WTC11 (cell line): ENCODE measurements at regions of chr17 and their contacts with region 1.

Region 1: DNA sequence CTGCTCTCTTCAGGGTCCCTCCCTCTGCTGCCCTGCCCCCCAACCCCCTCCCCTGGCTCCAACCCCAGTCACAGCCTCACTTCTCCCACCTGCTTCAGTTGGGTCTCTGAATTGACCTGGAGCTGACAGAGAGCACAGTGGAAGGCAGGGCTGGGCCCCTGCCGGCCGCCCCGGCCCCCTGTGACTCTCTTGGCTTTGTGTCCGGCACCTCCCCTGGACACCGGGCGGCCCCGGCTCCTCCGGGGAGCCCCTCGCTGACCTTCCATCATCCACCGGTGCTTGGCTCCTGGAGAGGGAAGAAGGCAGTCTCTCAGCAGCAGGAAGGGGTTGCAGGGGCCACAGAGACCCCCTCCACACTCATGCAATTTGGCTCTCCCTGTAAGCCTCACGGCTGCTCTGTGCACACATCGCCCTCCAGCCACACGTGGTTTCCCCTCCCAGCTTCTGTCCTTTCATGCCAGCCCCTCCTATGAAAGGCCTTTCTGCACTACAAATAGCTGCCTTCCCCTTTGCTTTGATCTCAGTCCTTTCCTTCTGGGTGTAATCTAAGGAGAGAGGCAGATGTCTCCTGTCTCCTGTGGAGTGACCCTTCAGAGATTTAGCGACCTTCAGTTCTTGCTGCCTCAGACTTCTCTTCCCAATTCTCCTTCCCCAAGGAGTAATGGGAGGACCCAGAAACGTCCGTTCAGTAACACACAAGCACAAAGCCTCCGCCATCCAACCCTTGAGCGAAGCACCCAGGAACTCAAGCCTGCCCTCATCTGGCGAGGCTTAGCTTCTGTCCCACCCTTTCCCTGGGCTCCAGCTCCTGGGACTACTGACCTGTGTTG is 8.3 kb downstream of the NKIRAS2 start:
- DNase-seq: peak; percentile 76
- ATAC-seq: peak; percentile 84
- H3K4me3 Mint-ChIP-seq: peak overlapping the region; percentile 35; the same call in 1 of the 2 replicates
- H3K27ac Mint-ChIP-seq: peak overlapping the region; percentile 81; the same call in 1 of the 2 replicates
- H3K4me1 Mint-ChIP-seq: peaks cover 11% of the 10 kb centered on the region
- H3K27me3 Mint-ChIP-seq: peaks cover 3% of the 10 kb centered on the region; the same call in 1 of the 2 replicates
- CTCF ChIP-seq: no peak

Region 2: DNA sequence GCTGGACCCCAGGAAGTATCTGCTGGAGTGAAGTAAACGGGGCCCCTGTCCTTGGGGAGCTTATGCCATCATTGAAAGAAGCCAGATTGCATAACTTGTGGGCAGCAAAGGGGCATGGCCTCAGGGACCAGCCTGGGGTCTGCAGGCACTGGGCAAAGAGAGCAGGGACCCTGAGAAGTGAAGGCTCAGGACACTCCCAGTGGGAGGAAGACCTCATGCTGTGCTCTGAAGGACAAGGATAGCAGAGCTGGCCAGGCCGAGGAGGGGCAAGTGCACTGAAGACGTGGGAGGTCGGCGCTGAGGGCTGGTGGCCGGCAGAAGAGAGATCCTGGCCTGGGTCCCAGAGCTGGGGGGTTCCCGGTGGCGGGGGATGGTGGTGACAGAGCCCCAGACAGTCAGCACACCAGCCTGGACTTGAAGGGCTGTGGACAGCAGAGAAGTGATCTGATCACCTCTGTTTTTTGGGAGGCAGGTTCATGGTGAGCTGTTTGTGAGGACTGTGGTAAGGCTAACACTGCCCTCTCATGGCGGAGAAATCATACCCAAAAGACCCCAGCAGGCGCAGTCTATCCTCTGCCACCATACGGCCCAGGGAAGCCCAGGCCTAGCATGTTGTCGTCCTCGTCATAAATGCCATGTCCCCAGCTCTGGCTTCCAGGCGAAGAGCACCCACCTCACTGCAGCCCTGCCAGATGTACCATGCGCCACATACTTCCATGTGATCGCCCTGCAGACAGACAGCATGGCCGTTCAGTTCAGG is 68.7 kb before region 1 on chr17:
- CTCF ChIA-PET with region 1: interaction called, 21 read pairs
- POLR2A ChIA-PET with region 1: no interaction called
- DNase-seq: peak; percentile 61
- ATAC-seq: peak; percentile 84
- H3K4me3 Mint-ChIP-seq: no peak overlapping the region
- H3K27ac Mint-ChIP-seq: peak overlapping the region; percentile 73
- H3K4me1 Mint-ChIP-seq: peaks cover 30% of the 10 kb centered on the region
- H3K27me3 Mint-ChIP-seq: peaks cover 2% of the 10 kb centered on the region; the same call in 1 of the 2 replicates
- CTCF ChIP-seq: no peak

Region 3: DNA sequence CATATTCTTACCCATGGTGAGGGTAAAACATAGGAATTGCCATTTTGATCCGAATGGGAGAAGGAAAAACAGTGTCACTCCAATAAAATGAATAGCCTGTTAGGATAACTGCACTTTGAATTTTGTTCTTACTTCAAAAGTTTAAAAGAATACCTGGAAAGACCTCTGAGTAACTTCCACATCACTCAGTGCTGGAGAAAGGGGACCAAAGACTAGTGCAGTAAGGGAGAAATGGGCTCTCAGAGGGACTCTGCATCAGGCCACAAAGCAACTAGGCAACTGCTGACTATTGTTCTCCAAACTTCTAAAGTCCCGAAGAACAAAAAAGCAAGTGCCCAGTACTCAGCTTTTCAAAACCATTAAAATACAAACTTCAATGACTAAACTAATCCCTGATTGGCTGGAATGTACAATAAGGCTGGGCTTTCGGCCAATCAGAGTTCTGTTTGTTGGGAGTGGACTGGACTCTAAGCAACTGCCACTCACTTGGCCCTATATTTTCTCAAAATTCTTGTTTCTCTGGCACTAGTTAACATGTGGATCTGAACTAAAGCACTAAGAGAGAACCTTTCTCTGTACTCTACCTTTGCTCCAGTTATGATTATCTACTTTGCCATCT is 17.2 kb before region 1 on chr17:
- CTCF ChIA-PET with region 1: interaction called, 108 read pairs
- POLR2A ChIA-PET with region 1: interaction called, 13 read pairs
- DNase-seq: no peak
- ATAC-seq: peak; percentile 7; the same call in 1 of the 2 replicates
- H3K4me3 Mint-ChIP-seq: no peak overlapping the region
- H3K27ac Mint-ChIP-seq: peak overlapping the region; percentile 95
- H3K4me1 Mint-ChIP-seq: peaks cover 47% of the 10 kb centered on the region
- H3K27me3 Mint-ChIP-seq: no peaks in the 10 kb centered on the region
- CTCF ChIP-seq: no peak

Region 4: DNA sequence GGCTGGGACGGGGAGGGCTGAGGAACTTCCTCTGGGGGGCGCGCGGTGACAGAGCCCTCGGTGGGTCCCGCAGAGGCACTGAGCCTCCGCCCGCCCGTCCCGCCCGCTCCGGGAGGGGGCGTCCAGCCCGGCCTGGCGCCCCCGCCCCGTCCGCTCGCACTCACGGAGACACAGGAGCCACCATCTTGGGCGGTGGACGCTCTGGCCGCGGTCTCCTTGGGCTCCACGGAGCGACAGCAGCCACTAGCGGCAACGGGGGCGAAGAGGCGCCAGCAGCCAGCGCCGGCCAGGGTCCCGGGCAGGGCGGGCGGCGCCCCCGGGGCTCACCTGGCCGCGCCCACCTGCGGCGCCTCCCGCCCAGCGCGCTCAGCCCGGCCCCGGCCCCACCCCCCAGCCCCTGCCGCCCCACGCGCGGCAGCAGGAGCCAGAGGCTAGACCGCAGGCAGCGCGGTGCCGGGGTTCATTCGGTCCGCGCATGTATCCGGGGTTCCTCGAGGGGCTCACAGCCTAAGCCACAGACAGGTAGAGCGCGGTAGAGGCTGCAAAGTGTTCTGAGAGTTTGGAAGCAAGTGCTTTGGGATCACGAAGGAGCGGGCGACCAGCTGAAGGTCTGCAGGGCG is 22.3 kb after region 1 on chr17 and contains the start of gene C17orf113:
- CTCF ChIA-PET with region 1: interaction called, 26 read pairs
- POLR2A ChIA-PET with region 1: no interaction called
- DNase-seq: peak; percentile 75
- ATAC-seq: peak; percentile 72
- H3K4me3 Mint-ChIP-seq: peak within 1 kb of the TSS; percentile 76
- H3K27ac Mint-ChIP-seq: no peak within 1 kb of the TSS
- H3K4me1 Mint-ChIP-seq: peaks cover 46% of the 10 kb centered on the region
- H3K27me3 Mint-ChIP-seq: peaks cover 9% of the 10 kb centered on the region
- CTCF ChIP-seq: no peak
- total RNA-seq, gene C17orf113: 1.9 to 2.8 TPM (median 2.5 TPM) in 3 replicates

Region 5: DNA sequence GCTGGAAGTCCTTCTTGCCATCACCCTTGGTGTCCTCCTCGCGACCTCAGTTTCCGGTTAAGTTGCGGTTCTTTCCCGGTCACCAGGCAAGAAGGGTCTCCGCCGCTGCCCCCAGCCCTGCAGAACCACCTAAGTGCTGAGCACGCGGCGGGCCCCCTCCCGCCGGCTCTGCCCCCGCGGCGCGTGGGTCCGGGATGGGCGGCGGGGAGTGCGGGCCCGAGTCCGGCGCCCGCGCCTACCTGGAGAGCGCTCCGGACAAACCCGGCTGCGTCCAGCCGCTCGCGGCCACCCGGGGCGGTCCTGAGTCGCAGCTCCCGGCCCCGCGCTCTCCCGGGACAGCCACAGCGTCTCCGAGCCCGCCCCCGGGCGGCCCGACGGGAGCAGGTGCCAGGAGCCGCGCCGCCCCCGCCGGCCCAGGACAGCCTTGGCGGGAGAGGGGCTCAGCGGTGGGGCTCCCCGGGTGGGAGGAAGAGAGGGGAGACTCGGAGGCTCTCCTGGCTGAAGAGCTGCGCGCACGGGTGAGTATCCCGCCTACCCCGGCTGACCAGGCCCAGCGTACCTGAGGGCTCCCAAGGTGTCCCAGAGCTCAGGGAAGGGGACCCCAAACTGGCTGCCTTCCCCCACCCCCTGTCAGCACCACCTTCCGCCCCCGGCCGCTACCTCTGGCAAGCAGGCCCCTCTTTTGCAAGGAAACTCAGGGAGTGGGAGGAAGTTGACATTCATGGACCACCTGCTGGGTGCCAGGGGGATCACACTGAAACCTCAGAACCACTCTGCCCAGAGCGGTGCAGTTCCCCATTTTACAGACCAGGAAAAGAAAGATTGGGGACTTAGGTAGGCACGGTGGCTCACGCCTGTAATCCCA is 44.4 kb after region 1 on chr17:
- CTCF ChIA-PET with region 1: interaction called, 40 read pairs
- POLR2A ChIA-PET with region 1: interaction called, 3 read pairs
- DNase-seq: peak; percentile 52
- ATAC-seq: peak; percentile 30
- H3K4me3 Mint-ChIP-seq: peak overlapping the region; percentile 77
- H3K27ac Mint-ChIP-seq: no peak overlapping the region
- H3K4me1 Mint-ChIP-seq: peaks cover 10% of the 10 kb centered on the region
- H3K27me3 Mint-ChIP-seq: peaks cover 11% of the 10 kb centered on the region
- CTCF ChIP-seq: no peak

Region 6: DNA sequence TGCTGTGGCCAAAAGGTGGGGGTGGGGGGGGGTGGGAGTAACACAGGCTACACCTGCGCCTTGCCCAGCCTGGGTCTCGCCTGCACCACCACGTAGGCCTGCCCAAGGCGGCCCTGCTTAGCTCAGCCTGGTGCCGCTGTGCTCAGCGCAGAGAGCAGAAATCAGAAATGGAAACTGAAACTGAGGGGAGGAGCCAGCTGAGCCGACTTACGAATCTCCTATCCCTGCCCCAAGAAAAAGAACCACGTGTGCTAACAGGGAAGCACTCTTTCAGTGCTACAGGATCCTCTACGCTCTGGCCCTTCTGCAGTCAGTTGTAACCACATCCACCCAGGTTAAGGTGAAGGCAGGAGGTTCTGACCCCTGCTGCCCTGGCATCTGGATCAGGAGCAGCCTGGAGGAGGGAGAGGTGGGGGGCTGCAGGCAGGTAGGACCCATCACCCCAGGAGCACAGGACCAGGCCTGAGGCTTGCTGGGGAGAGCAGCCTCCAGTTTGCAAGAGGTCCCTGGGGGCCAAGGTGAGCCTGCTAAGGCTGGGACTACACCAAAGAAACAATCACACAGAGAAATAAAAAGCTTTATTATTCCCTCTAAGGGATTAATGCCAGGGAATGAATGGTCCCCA is 84.5 kb after region 1 on chr17 and contains the start of gene DHX58:
- CTCF ChIA-PET with region 1: interaction called, 54 read pairs
- POLR2A ChIA-PET with region 1: interaction called, 3 read pairs
- DNase-seq: no peak
- ATAC-seq: peak; percentile 2; the same call in 1 of the 2 replicates
- H3K4me3 Mint-ChIP-seq: no peak within 1 kb of the TSS
- H3K27ac Mint-ChIP-seq: peak within 1 kb of the TSS; percentile 22
- H3K4me1 Mint-ChIP-seq: peaks cover 17% of the 10 kb centered on the region
- H3K27me3 Mint-ChIP-seq: no peaks in the 10 kb centered on the region
- CTCF ChIP-seq: no peak
- total RNA-seq, gene DHX58: 6.3 to 7.6 TPM (median 7.3 TPM) in 3 replicates